ENCODE measurements at regions of chr2 and their contacts with region 1.

Region 1: GRCh38 chr2:64767670-64768468 is 114.2 kb upstream of the SERTAD2 start:
- DNase-seq: peak; percentile 92
- ATAC-seq: peak; percentile 96

Region 2: GRCh38 chr2:64653349-64654062 is 114.4 kb before region 1 on chr2 and contains the start of gene SERTAD2:
- intact Hi-C with region 1: loop called (anchors 2 kb)
- DNase-seq: peak; percentile 96
- ATAC-seq: peak; percentile 93
- total RNA-seq, gene SERTAD2: 13.6 TPM

Region 3: GRCh38 chr2:64831134-64831976 is 63.5 kb after region 1 on chr2:
- intact Hi-C with region 1: loop called (anchors 5 kb)
- DNase-seq: peak; percentile 93
- ATAC-seq: peak; percentile 97

Region 4: GRCh38 chr2:64859312-64860212 is 91.7 kb after region 1 on chr2:
- intact Hi-C with region 1: loop called (anchors 1 kb)
- DNase-seq: peak; percentile 92
- ATAC-seq: peak; percentile 89